Mucosa of descending colon (tissue), 3 donors: ENCODE measurements at regions of chr14 and their contacts with region 1.

Region 1: GRCh38 chr14:67619446-67620216 is at the start of gene ARG2:
- DNase-seq: peak; percentile 99 to 100 (median 100)
- ATAC-seq: peak; percentile 98
- H3K4me3 ChIP-seq: no peak within 1 kb of the TSS
- H3K4me1 ChIP-seq: peaks cover 4% of the 10 kb centered on the region
- CTCF ChIP-seq: no peak
- total RNA-seq, gene ARG2: 0.84 to 5.0 (median 4.4) TPM

Region 2: DNA sequence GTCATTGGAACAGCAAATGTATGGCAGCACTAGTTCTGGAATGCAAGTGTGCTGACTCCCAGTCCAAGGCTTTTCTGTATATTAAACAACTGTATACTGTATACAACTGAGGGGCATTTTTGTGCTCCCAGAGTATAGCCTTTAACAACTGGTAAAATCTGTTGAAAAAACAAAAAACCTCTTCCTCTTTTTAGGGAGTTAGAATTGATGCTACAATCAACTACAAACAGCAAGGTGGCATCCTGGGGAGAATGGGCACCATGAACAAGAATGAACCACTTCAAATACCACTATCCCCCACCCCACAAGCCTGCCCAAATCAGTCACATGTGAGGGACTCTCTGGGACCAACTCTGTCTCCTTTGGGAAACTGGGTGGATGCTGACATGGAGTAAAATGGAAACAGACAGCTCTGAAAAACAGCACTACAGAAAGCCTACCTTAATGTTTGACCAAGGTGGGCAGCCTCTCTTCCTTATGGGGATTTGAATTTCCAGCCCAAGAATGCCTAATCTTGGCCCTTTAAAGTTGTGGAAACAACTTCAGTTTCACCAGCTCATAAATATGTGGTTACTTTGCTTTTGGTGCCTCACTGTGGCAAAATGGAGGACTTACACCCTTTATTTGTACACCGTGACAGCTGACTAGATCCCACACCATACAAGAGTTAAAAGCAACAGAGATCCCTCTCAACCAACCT is 47.3 kb after region 1 on chr14:
- intact Hi-C with region 1: loop called in 1 of 2 experiments (anchors 5 kb)
- DNase-seq: peak in 1 of 3 donors; percentile 41
- ATAC-seq: peak; percentile 86
- H3K4me3 ChIP-seq: no peak overlapping the region
- H3K4me1 ChIP-seq: peaks cover 9% of the 10 kb centered on the region
- CTCF ChIP-seq: no peak

Region 3: GRCh38 chr14:67704484-67705089 is 85.0 kb after region 1 on chr14:
- intact Hi-C with region 1: loop called in 1 of 2 experiments (anchors 1 kb)
- DNase-seq: peak in 1 of 3 donors; percentile 61
- ATAC-seq: peak; percentile 85
- H3K4me3 ChIP-seq: no peak overlapping the region
- H3K4me1 ChIP-seq: no peaks in the 10 kb centered on the region
- CTCF ChIP-seq: no peak

Region 4: DNA sequence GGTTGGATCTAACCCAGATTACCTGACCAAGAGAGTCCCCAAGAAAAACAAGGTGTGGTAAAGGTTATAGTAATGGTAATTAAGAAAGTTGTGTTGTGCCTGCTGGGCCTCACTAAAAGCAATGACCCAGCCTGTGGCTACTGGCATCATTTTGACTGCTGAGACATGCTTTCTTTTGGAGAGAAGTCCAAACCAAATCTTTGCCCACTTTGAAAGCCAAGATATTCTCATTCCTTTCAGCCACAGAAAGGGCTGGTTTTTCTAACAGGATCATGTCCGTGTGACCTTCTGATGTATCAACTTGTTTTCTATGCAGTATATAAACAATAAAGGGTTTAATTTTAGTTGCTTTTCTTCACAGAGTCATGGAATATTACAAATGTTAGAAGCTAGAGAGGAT is 588.6 kb after region 1 on chr14:
- intact Hi-C with region 1: no loop called
- DNase-seq: no peak
- ATAC-seq: no peak
- H3K4me3 ChIP-seq: no peak overlapping the region
- H3K4me1 ChIP-seq: peaks cover 13% of the 10 kb centered on the region
- CTCF ChIP-seq: no peak